ENCODE measurements at regions of chr2 and their contacts with region 1.

Region 1: GRCh38 chr2:226835796-226836547 is at the start of gene RHBDD1:
- DNase-seq: peak; percentile 95
- ATAC-seq: peak; percentile 87
- H3K4me3 Mint-ChIP-seq: peak within 1 kb of the TSS; percentile 88
- H3K27ac Mint-ChIP-seq: peak within 1 kb of the TSS; percentile 96
- H3K4me1 Mint-ChIP-seq: peaks cover 49% of the 10 kb centered on the region
- H3K27me3 Mint-ChIP-seq: no peaks in the 10 kb centered on the region
- CTCF ChIP-seq: no peak
- total RNA-seq, gene RHBDD1: 34.3 to 35.9 TPM

Region 2: DNA sequence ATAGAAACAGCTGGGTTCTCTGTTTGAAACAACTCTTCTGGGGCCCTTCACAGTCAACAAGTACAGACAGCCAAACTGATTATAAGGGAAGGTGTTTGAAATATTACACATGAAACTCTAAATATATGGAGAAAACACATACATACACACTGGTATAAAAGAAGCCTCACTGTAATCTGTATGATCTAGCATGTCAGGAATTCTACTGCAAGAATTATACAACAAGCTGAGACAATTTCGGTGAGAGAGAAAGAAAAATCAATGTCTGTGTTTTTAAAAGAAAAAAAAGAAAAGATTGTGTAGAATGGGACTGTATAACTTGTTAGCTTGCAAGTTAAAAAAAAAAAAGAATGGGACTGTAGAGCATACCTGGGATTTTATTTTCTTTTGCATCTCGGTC is 62.7 kb before region 1 on chr2:
- CTCF ChIA-PET with region 1: no interaction called
- POLR2A ChIA-PET with region 1: no interaction called
- intact Hi-C with region 1: no loop called
- DNase-seq: no peak
- ATAC-seq: no peak
- H3K4me3 Mint-ChIP-seq: no peak overlapping the region
- H3K27ac Mint-ChIP-seq: peak overlapping the region; percentile 56
- H3K4me1 Mint-ChIP-seq: peaks cover 23% of the 10 kb centered on the region
- H3K27me3 Mint-ChIP-seq: no peaks in the 10 kb centered on the region
- CTCF ChIP-seq: no peak

Region 3: DNA sequence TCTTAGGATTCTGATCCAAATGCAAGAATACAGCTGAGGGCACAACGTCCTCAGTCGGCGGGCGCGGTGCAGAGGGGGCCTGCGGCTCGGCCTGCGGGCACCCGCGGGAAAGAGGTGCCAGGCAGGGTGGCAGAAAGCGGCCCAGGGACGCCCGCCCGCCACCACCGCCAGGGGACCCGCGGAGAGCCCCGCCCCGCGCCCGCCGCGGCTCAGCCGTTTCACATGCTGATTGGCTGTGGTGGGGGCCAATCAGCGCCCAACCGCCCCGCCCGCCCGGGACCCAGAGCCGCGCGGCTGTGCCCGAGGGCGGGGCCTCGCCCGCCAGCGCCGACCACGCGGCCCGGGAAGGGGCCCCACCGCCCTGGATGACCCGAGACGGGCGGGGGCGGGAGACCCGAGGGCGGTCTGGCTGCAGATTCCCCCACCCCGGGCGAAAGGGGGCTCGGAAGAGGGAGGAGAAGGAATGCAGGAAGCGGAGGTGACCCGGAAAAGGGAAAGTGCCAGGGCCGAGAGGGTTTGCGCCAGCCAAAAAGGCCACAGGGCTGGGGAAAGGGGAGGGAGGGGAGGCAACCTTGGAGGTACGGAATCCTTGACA is 44.4 kb before region 1 on chr2:
- CTCF ChIA-PET with region 1: interaction called, 4 read pairs
- POLR2A ChIA-PET with region 1: interaction called, 16 read pairs
- intact Hi-C with region 1: no loop called
- DNase-seq: peak; percentile 92
- ATAC-seq: peak; percentile 98
- H3K4me3 Mint-ChIP-seq: peak overlapping the region; percentile 87
- H3K27ac Mint-ChIP-seq: peak overlapping the region; percentile 97
- H3K4me1 Mint-ChIP-seq: peaks cover 62% of the 10 kb centered on the region
- H3K27me3 Mint-ChIP-seq: no peaks in the 10 kb centered on the region
- CTCF ChIP-seq: peak; percentile 47

Region 4: DNA sequence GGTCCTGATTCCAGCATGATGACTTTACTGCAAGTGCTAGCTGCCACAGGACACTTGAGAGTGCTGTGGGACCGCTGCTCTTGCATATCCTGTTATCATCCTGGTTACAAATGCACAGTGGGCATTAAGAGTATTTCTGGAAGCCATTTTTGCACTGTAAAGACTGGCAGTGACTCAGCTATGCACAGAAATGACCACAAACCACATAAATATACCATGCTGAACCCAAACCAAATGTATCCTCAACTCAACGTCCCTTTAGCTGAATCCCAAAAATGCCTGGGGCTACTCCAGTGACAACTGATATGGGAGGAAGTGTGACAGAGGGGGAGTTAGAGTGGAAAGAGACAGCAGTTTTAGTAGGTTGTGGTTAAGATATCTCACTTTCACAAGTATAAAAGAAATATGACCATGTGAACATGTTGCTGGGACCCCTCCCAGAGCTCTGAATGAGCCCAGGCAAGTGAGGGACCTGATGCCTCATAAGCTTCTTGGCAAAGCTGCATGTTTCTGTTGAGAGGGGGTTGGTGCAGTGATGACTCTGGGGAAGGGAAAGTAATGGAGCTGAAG is 37.2 kb after region 1 on chr2:
- CTCF ChIA-PET with region 1: no interaction called
- POLR2A ChIA-PET with region 1: interaction called, 8 read pairs
- intact Hi-C with region 1: loop called (anchors 1 kb)
- DNase-seq: peak; percentile 23
- ATAC-seq: peak; percentile 46
- H3K4me3 Mint-ChIP-seq: no peak overlapping the region
- H3K27ac Mint-ChIP-seq: peak overlapping the region; percentile 83
- H3K4me1 Mint-ChIP-seq: peaks cover 37% of the 10 kb centered on the region
- H3K27me3 Mint-ChIP-seq: no peaks in the 10 kb centered on the region
- CTCF ChIP-seq: no peak

Region 5: DNA sequence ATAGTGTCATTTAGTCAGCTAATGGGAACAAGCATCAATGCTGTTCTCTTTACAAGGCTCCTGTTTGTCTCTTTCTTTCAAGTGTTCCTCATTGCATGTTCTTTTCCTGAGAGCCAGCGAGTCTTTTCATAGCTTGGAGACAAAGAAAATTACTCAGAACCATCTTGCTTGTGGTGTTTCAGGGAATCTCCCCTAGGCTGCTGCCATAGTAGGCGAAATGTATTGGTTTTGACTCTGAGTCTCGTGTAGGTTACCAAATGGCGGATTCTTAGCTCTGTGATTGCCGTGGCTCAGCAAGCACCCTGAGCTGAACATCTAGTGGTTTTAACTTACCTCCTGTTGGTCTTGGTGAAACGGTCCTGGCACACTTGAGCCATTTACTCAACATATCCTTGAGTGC is 68.6 kb after region 1 on chr2:
- CTCF ChIA-PET with region 1: no interaction called
- POLR2A ChIA-PET with region 1: interaction called, 5 read pairs
- intact Hi-C with region 1: loop called (anchors 1 kb)
- DNase-seq: peak; percentile 43
- ATAC-seq: peak; percentile 68
- H3K4me3 Mint-ChIP-seq: no peak overlapping the region
- H3K27ac Mint-ChIP-seq: peak overlapping the region; percentile 39
- H3K4me1 Mint-ChIP-seq: peaks cover 58% of the 10 kb centered on the region
- H3K27me3 Mint-ChIP-seq: no peaks in the 10 kb centered on the region
- CTCF ChIP-seq: no peak

Region 6: GRCh38 chr2:226984750-226985582 is 149.0 kb after region 1 on chr2:
- CTCF ChIA-PET with region 1: no interaction called
- POLR2A ChIA-PET with region 1: interaction called, 13 read pairs
- intact Hi-C with region 1: loop called (anchors 5 kb)
- DNase-seq: peak; percentile 57
- ATAC-seq: peak; percentile 97
- H3K4me3 Mint-ChIP-seq: no peak overlapping the region
- H3K27ac Mint-ChIP-seq: peak overlapping the region; percentile 34
- H3K4me1 Mint-ChIP-seq: peaks cover 22% of the 10 kb centered on the region
- H3K27me3 Mint-ChIP-seq: no peaks in the 10 kb centered on the region
- CTCF ChIP-seq: peak; percentile 65